ENCODE measurements at regions of chr9 and their contacts with region 1.

Region 1: GRCh38 chr9:104927912-104928740 is at the start of gene ABCA1:
- DNase-seq: peak; percentile 77
- H3K4me3 ChIP-seq: peak within 1 kb of the TSS; percentile 96
- H3K27ac ChIP-seq: peak within 1 kb of the TSS; percentile 84
- H3K4me1 ChIP-seq: peaks cover 28% of the 10 kb centered on the region
- H3K27me3 ChIP-seq: no peaks in the 10 kb centered on the region
- CTCF ChIP-seq: no peak
- total RNA-seq, gene ABCA1: 22.4 and 38.3 TPM in 2 replicates

Region 2: DNA sequence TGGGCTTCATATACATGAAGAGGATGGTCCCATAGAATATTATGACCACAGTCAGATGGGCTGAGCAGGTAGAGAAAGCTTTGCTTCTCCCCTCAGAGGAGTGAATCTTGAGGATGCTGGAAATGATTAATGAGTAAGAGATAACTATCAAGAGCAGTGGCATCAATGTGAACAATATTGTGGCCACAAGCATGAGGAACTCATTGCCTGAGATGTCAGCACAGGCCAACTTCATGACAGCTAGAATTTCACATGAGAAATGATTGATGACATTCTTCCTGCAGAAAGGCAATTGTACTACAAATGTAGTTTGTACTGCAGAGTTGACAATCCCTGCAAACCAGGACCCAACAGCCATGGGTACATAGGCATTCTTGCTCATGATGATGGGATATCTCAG is 310.7 kb before region 1 on chr9:
- CTCF ChIA-PET with region 1: no interaction called
- POLR2A ChIA-PET with region 1: no interaction called
- intact Hi-C with region 1: no loop called
- DNase-seq: no peak
- H3K4me3 ChIP-seq: no peak overlapping the region
- H3K27ac ChIP-seq: no peak overlapping the region
- H3K4me1 ChIP-seq: no peaks in the 10 kb centered on the region
- H3K27me3 ChIP-seq: no peaks in the 10 kb centered on the region
- CTCF ChIP-seq: no peak

Region 3: DNA sequence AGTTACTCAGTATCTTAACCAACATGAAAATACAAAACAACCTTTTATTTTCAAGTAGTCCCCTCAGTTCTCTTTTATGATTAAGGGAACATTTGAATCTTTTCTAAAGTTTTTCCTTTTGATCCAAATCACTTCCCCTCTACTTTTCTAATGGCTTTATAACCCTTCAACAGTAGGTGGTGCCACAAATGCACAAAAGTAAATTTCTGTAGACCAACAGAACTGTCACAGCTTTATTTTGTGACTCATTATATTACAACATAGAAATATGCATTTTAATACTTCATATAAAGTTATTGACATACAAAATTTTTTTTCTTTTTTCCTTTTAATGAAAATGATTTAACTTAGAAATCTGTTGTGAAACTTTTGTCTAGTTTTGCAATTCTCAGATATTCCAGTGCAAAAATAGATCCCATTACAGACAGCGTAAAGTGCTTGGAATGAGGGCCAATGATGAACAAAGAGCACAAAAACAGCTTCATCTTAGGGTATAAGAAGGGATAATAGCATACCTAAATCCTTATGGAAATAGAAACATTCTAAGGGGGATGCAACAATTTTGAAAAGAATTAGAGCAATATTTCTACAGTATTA is 147.2 kb before region 1 on chr9:
- CTCF ChIA-PET with region 1: no interaction called
- POLR2A ChIA-PET with region 1: no interaction called
- intact Hi-C with region 1: loop called (anchors 5 kb)
- DNase-seq: peak in 1 of 2 experiments; percentile 43
- H3K4me3 ChIP-seq: no peak overlapping the region
- H3K27ac ChIP-seq: no peak overlapping the region
- H3K4me1 ChIP-seq: no peaks in the 10 kb centered on the region
- H3K27me3 ChIP-seq: no peaks in the 10 kb centered on the region
- CTCF ChIP-seq: peak; percentile 66

Region 4: DNA sequence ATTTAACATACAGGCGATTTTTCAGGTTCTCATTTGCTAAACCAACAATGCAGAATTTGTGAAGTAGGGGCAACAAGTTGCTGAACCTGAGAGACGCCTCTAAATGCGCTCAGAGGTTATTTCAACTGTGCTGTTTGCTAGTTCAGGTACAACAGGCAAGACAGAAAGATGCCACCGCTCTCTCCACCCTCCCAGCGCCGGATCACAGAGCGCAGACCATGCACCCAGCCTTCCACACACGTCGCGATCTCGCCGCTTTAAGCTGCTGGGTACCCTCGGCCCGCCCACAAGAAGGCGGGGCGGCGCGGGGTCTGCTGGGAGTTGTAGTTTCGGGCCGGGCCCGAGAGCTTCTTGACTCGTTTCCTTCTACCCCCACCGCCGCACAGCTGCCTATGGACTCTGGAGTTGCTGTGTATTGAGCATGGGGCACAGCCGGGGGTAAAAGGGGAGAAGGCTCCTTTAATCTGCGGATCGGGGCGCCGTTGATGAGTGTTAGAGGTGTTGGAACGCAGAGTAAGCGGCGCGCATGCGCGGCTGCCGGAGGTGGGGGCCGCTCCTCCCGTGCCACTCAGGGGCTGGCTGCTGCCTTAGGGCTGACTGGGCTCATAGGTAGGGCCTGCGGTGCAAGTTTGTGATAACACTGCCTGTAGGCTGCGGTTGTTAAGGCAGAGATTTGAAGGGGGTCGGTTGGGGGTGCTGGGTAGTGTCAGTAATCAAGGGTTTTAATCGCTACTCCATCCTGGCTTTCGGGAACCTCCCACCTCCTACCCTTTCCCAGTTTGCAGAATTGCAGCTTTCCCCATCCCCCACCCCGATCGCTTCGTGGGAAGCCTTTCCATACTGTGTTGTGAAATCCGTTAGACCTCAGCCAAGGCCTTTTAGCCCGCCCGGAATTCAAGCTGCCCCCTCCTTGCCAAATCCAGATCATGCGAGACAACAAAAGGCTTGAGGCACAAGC is 40.2 kb after region 1 on chr9:
- CTCF ChIA-PET with region 1: interaction called, 4 read pairs
- POLR2A ChIA-PET with region 1: interaction called, 4 read pairs
- intact Hi-C with region 1: loop called (anchors 1 kb)
- DNase-seq: peak; percentile 74 to 91
- H3K4me3 ChIP-seq: peak overlapping the region; percentile 99
- H3K27ac ChIP-seq: peak overlapping the region; percentile 85
- H3K4me1 ChIP-seq: peaks cover 26% of the 10 kb centered on the region
- H3K27me3 ChIP-seq: no peaks in the 10 kb centered on the region
- CTCF ChIP-seq: no peak

Region 5: DNA sequence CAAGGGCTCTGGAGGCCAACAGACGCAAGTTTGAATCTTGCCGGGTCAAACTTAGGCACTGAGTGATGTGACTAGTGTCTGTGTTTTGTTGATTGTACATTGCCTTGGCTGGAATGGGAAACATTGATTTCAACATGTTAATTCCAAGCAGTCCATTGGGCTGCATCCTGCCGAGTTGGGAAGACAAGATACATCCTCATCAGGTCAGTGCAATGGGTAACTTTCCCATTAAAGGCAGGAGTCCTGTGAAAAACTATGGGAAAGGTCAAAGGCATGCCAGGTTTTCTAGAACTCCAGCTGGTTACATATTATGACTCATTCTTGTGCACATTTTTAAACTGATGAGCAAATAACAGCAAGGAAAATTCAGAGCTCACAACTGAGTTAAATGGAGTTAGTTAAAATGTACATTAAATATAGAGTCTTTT is 126.4 kb after region 1 on chr9:
- CTCF ChIA-PET with region 1: no interaction called
- POLR2A ChIA-PET with region 1: interaction called, 4 read pairs
- intact Hi-C with region 1: loop called (anchors 2 kb)
- DNase-seq: peak in 1 of 2 experiments; percentile 64
- H3K4me3 ChIP-seq: no peak overlapping the region
- H3K27ac ChIP-seq: peak overlapping the region; percentile 80
- H3K4me1 ChIP-seq: peaks cover 55% of the 10 kb centered on the region
- H3K27me3 ChIP-seq: no peaks in the 10 kb centered on the region
- CTCF ChIP-seq: no peak

Region 6: GRCh38 chr9:105083256-105083655 is 155.1 kb after region 1 on chr9:
- CTCF ChIA-PET with region 1: no interaction called
- POLR2A ChIA-PET with region 1: no interaction called
- intact Hi-C with region 1: loop called (anchors 1 kb)
- DNase-seq: no peak
- H3K4me3 ChIP-seq: no peak overlapping the region
- H3K27ac ChIP-seq: no peak overlapping the region
- H3K4me1 ChIP-seq: peaks cover 26% of the 10 kb centered on the region
- H3K27me3 ChIP-seq: no peaks in the 10 kb centered on the region
- CTCF ChIP-seq: no peak

Region 7: GRCh38 chr9:105157130-105157583 is 229.0 kb after region 1 on chr9:
- CTCF ChIA-PET with region 1: interaction called, 3 read pairs
- POLR2A ChIA-PET with region 1: no interaction called
- intact Hi-C with region 1: loop called (anchors 1 kb)
- DNase-seq: peak; percentile 52 to 71
- H3K4me3 ChIP-seq: no peak overlapping the region
- H3K27ac ChIP-seq: no peak overlapping the region
- H3K4me1 ChIP-seq: peaks cover 24% of the 10 kb centered on the region
- H3K27me3 ChIP-seq: no peaks in the 10 kb centered on the region
- CTCF ChIP-seq: peak; percentile 71

Region 8: GRCh38 chr9:105414947-105415661 is 487.0 kb after region 1 on chr9:
- CTCF ChIA-PET with region 1: no interaction called
- POLR2A ChIA-PET with region 1: no interaction called
- intact Hi-C with region 1: loop called (anchors 1 kb)
- DNase-seq: peak in 1 of 2 experiments; percentile 45
- H3K4me3 ChIP-seq: no peak overlapping the region
- H3K27ac ChIP-seq: no peak overlapping the region
- H3K4me1 ChIP-seq: 0 out of 2 replicates have a peak, but pooled peaks cover 3% of the 10 kb centered on the region
- H3K27me3 ChIP-seq: no peaks in the 10 kb centered on the region
- CTCF ChIP-seq: peak; percentile 98

Measured in PC-9 (cell line).